PC-9 (cell line): ENCODE measurements at regions of chrX and their contacts with region 1.

Region 1: GRCh38 chrX:140057001-140057411 is 91.7 kb upstream of the CXorf66 start:
- DNase-seq: peak; percentile 42 to 47
- H3K4me3 ChIP-seq: no peak overlapping the region
- H3K27ac ChIP-seq: no peak overlapping the region
- H3K4me1 ChIP-seq: no peaks in the 10 kb centered on the region
- H3K27me3 ChIP-seq: 0 out of 2 replicates have a peak, but pooled peaks cover 5% of the 10 kb centered on the region
- CTCF ChIP-seq: peak; percentile 87

Region 2: DNA sequence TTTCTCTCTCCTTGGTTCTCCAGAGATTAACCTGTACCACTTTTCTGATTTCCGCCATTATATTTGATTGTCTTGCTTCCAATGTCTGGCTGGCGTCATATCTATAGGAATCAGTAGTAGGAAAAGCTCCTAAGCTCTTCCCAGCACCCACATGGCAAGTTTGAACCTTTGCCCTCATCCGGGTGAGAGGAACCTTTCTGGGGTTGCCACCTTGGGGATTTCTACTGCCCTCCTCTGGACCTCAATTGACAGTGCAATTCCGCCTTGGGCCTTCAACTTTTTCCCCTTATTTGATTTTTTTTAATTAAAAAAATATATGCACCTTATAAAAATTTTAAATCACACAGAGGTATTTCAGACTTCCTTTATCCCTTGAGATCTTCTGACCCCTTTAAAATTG is 89.7 kb before region 1 on chrX:
- CTCF ChIA-PET with region 1: no interaction called
- POLR2A ChIA-PET with region 1: no interaction called
- intact Hi-C with region 1: no loop called
- DNase-seq: no peak
- H3K4me3 ChIP-seq: no peak overlapping the region
- H3K27ac ChIP-seq: no peak overlapping the region
- H3K4me1 ChIP-seq: no peaks in the 10 kb centered on the region
- H3K27me3 ChIP-seq: no peaks in the 10 kb centered on the region
- CTCF ChIP-seq: peak; percentile 51

Region 3: DNA sequence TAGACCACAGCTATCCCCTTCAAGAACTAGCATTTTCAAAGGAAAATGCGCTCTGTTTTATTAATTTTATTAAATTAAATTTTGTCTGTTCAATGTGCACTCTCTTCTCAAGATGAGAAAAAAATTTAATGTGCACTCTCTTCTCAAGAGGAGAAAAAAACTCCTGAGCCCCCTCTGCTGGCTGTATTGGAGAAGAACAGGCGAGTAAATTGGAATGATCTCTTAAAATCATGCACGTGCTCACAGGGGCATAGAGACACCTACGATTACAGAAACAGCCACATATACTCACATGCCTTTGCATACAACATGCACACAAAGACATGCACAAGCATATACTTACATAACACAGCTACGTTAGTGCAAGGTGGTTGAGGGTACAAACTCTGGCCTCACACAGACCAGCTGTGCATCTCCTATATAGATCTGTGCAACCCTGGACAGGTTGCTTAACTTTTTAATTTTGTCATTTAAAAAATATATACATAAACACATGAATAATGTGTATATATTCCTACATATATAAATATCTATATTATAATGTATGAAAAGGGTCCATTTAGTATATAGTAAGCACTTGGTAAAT is 84.5 kb after region 1 on chrX:
- CTCF ChIA-PET with region 1: no interaction called
- POLR2A ChIA-PET with region 1: no interaction called
- intact Hi-C with region 1: loop called (anchors 5 kb)
- DNase-seq: peak in 1 of 2 experiments; percentile 16
- H3K4me3 ChIP-seq: no peak overlapping the region
- H3K27ac ChIP-seq: no peak overlapping the region
- H3K4me1 ChIP-seq: no peaks in the 10 kb centered on the region
- H3K27me3 ChIP-seq: peaks cover 9% of the 10 kb centered on the region; the same call in 1 of the 2 replicates
- CTCF ChIP-seq: peak; percentile 77

Region 4: GRCh38 chrX:140229187-140229586 is 172.2 kb after region 1 on chrX:
- CTCF ChIA-PET with region 1: no interaction called
- POLR2A ChIA-PET with region 1: no interaction called
- intact Hi-C with region 1: no loop called
- DNase-seq: no peak
- H3K4me3 ChIP-seq: no peak overlapping the region
- H3K27ac ChIP-seq: no peak overlapping the region
- H3K4me1 ChIP-seq: no peaks in the 10 kb centered on the region
- H3K27me3 ChIP-seq: no peaks in the 10 kb centered on the region
- CTCF ChIP-seq: no peak

Region 5: GRCh38 chrX:140360284-140360683 is 303.3 kb after region 1 on chrX:
- CTCF ChIA-PET with region 1: no interaction called
- POLR2A ChIA-PET with region 1: no interaction called
- intact Hi-C with region 1: no loop called
- DNase-seq: no peak
- H3K4me3 ChIP-seq: no peak overlapping the region
- H3K27ac ChIP-seq: no peak overlapping the region
- H3K4me1 ChIP-seq: no peaks in the 10 kb centered on the region
- H3K27me3 ChIP-seq: peaks cover 8% of the 10 kb centered on the region; the same call in 1 of the 2 replicates
- CTCF ChIP-seq: no peak

Region 6: DNA sequence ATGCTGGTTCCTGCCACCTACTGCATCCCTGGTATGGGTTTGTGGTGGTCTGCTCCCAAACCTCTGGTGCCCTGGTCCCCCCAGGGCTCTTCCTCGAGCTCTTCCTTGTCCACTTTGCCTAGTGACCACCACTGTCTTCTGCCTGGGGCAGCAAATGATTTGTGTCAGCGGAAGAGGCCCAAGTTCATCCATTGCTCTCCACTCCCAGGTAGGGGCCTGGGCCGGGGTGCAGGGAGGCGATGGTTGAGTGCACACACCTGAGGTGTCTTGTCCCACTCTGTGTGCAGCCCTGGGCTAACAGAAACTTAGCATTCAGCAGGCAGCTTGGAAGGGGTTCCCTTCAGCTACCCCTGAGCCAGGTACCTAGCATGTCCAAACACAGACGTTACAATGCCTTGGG is 523.5 kb after region 1 on chrX:
- CTCF ChIA-PET with region 1: no interaction called
- POLR2A ChIA-PET with region 1: no interaction called
- intact Hi-C with region 1: no loop called
- DNase-seq: no peak
- H3K4me3 ChIP-seq: no peak overlapping the region
- H3K27ac ChIP-seq: no peak overlapping the region
- H3K4me1 ChIP-seq: no peaks in the 10 kb centered on the region
- H3K27me3 ChIP-seq: no peaks in the 10 kb centered on the region
- CTCF ChIP-seq: no peak

Region 7: GRCh38 chrX:140664939-140665338 is 607.9 kb after region 1 on chrX:
- CTCF ChIA-PET with region 1: no interaction called
- POLR2A ChIA-PET with region 1: no interaction called
- intact Hi-C with region 1: loop called (anchors 5 kb)
- DNase-seq: no peak
- H3K4me3 ChIP-seq: no peak overlapping the region
- H3K27ac ChIP-seq: no peak overlapping the region
- H3K4me1 ChIP-seq: no peaks in the 10 kb centered on the region
- H3K27me3 ChIP-seq: peaks cover 3% of the 10 kb centered on the region; the same call in 1 of the 2 replicates
- CTCF ChIP-seq: peak; percentile 57

Region 8: GRCh38 chrX:140733769-140734342 is 676.9 kb after region 1 on chrX:
- CTCF ChIA-PET with region 1: no interaction called
- POLR2A ChIA-PET with region 1: no interaction called
- intact Hi-C with region 1: loop called (anchors 2 kb)
- DNase-seq: peak in 1 of 2 experiments; percentile 19
- H3K4me3 ChIP-seq: no peak overlapping the region
- H3K27ac ChIP-seq: no peak overlapping the region
- H3K4me1 ChIP-seq: no peaks in the 10 kb centered on the region
- H3K27me3 ChIP-seq: peaks cover 11% of the 10 kb centered on the region
- CTCF ChIP-seq: peak; percentile 86